Caco-2 (cell line): ENCODE measurements at regions of chr18 and their contacts with region 1.

Region 1: DNA sequence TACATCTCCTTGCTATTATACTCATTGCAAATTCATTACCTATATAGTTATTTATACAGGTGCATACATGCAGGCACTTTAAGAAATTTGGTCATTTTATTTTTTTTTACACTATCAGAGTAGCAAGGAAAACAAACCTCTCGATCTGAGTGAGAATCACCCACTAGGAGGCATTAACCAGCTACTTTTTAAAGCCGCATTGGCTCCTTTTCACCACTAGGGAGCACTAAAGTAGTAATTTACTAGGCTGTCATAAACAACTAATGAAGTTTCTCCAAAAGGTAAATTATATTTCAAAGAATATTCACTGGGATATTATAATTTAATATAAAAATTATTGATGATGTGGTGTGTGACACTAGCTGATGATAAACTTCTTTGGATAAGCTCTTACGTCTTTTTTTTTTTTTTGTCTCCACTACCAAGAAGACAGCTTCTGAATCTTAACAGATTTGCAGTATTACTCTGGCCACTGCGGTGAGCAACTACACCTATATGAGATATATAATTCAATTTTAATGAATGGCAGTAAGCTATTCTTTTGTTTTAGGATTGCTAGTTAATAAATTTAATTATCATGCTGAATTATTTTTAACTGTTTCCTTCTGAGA is 101.9 kb downstream of the NOL4 start:
- DNase-seq: peak in 1 of 2 experiments; percentile 22
- H3K4me3 ChIP-seq: no peak overlapping the region
- H3K4me3 Mint-ChIP-seq: no peak overlapping the region
- H3K27ac Mint-ChIP-seq: no peak overlapping the region
- H3K4me1 ChIP-seq: no peaks in the 10 kb centered on the region
- H3K4me1 Mint-ChIP-seq: peaks cover 6% of the 10 kb centered on the region
- H3K27me3 ChIP-seq: no peaks in the 10 kb centered on the region
- H3K27me3 Mint-ChIP-seq: no peaks in the 10 kb centered on the region
- CTCF ChIP-seq: peak; percentile 63 to 74

Region 2: GRCh38 chr18:33987206-33987605 is 135.6 kb before region 1 on chr18:
- CTCF ChIA-PET with region 1: no interaction called
- POLR2A ChIA-PET with region 1: no interaction called
- intact Hi-C with region 1: no loop called
- DNase-seq: no peak
- H3K4me3 ChIP-seq: no peak overlapping the region
- H3K4me3 Mint-ChIP-seq: no peak overlapping the region
- H3K27ac Mint-ChIP-seq: no peak overlapping the region
- H3K4me1 ChIP-seq: no peaks in the 10 kb centered on the region
- H3K4me1 Mint-ChIP-seq: no peaks in the 10 kb centered on the region
- H3K27me3 ChIP-seq: no peaks in the 10 kb centered on the region
- H3K27me3 Mint-ChIP-seq: no peaks in the 10 kb centered on the region
- CTCF ChIP-seq: no peak

Region 3: DNA sequence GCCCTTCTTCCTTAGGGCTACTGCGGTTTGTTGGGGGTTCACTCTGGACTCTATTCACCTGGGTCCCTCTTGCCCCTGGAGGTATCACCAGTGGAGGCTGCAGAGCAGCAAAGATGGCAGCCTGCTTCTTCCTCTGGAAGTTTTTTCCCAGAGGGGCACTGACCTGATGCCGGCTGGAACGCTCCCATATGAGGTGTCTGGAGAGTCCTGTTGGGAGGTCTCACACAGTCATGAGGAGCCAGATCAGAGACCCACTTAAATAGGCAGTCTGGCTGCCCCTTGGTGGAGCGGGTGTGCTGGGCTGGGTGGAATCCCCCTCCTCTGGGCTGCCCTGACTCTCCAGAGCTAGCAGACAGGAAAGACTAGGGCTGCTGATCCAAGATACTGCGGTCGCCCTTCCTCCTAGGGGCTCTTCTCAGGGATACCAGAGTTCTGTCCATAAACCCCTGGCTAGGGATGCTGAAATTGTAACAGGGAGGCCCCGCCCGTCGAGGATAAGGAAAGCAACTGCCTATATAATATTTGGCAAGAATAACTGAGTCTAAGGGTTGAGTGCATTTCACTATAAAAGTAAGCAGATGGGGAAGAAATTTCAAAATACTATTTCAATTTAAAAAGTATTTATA is 38.8 kb before region 1 on chr18:
- CTCF ChIA-PET with region 1: no interaction called
- POLR2A ChIA-PET with region 1: no interaction called
- intact Hi-C with region 1: no loop called
- DNase-seq: no peak
- H3K4me3 ChIP-seq: no peak overlapping the region
- H3K4me3 Mint-ChIP-seq: no peak overlapping the region
- H3K27ac Mint-ChIP-seq: no peak overlapping the region
- H3K4me1 ChIP-seq: no peaks in the 10 kb centered on the region
- H3K4me1 Mint-ChIP-seq: no peaks in the 10 kb centered on the region
- H3K27me3 ChIP-seq: no peaks in the 10 kb centered on the region
- H3K27me3 Mint-ChIP-seq: no peaks in the 10 kb centered on the region
- CTCF ChIP-seq: no peak

Region 4: DNA sequence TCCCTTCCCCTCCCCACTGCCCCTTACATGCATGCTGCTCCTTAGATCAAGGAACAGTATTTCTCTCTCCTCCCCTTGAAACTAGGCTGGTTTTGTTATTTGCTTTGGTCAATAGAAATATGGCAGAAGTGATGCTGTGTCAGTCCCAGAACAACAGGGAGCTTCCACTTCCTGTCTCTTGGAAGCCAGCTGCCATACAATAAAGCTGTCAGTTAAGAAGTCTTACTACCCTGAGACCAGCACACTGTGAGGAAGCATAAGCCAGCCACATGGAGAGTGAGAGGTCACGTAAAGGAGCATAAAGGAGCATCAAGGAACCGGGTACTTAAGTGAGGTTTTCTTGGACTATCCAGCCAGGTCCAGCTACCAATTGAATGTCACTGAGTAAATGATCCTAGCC is 24.7 kb before region 1 on chr18:
- CTCF ChIA-PET with region 1: no interaction called
- POLR2A ChIA-PET with region 1: no interaction called
- intact Hi-C with region 1: loop called (anchors 2 kb)
- DNase-seq: no peak
- H3K4me3 ChIP-seq: no peak overlapping the region
- H3K4me3 Mint-ChIP-seq: no peak overlapping the region
- H3K27ac Mint-ChIP-seq: no peak overlapping the region
- H3K4me1 ChIP-seq: no peaks in the 10 kb centered on the region
- H3K4me1 Mint-ChIP-seq: no peaks in the 10 kb centered on the region
- H3K27me3 ChIP-seq: no peaks in the 10 kb centered on the region
- H3K27me3 Mint-ChIP-seq: no peaks in the 10 kb centered on the region
- CTCF ChIP-seq: no peak

Region 5: DNA sequence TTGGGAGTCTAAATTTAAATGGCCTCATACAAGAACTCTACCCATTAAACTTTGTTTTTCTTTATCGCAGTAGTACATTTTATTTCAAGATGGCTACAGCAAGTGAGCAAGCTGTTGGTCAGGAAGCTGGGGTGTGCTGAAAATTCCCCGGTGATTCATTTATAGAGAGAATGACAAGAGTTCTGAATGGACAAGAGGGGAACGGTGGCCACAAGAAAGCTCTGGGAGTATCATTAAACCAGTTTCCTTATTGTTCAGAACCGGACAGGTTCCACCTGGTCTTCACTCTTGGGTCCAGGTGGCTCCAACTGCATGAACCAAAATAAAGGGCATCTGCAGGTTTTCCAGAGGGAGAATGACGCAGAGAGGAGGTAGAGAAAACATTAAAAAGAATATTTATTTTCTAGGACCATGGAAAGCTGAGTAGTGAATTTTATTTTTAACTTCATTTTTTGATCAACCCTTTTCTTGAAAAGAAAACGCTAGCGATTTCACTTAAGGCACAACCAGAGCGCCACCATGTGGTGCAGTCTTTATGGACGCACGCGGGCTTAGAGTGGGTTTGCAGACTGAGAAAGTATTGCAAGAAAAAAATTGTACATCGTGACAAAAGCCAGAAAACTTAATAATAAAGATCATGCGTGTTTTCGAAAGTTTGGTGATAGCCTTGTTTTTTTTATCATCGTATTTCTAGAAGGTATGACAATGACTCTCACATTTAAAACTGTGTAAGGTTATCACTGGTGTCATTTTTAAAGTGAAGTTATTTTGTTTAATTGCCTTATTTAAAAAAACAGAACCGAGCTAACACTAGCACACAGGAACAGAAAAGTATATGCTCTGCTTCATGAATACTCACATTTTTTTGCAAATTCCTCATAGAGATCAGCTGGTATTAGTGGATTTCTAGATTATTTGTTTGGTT is 199.8 kb after region 1 on chr18:
- CTCF ChIA-PET with region 1: interaction called, 3 read pairs
- POLR2A ChIA-PET with region 1: no interaction called
- intact Hi-C with region 1: loop called (anchors 1 kb)
- DNase-seq: peak in 1 of 2 experiments; percentile 1
- H3K4me3 ChIP-seq: no peak overlapping the region
- H3K4me3 Mint-ChIP-seq: no peak overlapping the region
- H3K27ac Mint-ChIP-seq: no peak overlapping the region
- H3K4me1 ChIP-seq: no peaks in the 10 kb centered on the region
- H3K4me1 Mint-ChIP-seq: no peaks in the 10 kb centered on the region
- H3K27me3 ChIP-seq: no peaks in the 10 kb centered on the region
- H3K27me3 Mint-ChIP-seq: no peaks in the 10 kb centered on the region
- CTCF ChIP-seq: peak in 1 of 2 experiments; percentile 10